Ovary (tissue), 10 donors: ENCODE measurements at regions of chr5 and their contacts with region 1.

Region 1: DNA sequence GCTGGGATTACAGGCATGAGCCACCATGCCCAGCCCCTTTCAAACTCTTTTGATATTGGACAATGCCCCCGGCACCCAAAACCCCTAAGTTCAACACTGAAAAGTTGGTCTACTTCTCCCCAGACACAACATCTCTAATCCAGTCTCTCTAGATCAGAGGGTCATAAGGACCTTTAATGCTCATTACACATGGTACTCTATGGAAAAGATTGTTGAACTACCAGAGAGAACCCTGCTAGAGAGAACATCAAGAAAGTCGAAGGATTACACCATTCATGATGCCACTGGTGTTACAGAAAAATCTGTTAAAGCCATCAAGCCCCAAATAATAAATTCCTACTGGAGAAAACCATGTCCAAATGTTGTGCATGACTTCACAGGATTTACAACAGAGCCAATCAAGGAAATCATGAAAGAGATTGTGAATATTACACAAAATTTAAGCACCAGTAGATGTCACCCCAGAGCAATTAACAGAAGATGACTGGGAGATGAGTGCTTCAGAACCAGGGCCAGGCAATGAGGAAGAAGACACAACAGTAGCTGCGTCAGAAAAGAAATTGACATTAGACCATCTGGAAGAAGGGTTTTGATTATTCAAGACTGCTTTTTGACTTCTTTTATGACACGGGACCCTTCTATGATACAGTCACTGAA is 28.3 kb upstream of the NIPAL4 start:
- DNase-seq: no peak
- H3K4me3 ChIP-seq: no peak overlapping the region
- H3K27ac ChIP-seq: no peak overlapping the region
- H3K4me1 ChIP-seq: no peaks in the 10 kb centered on the region
- H3K27me3 ChIP-seq: no peaks in the 10 kb centered on the region
- CTCF ChIP-seq: peak in 1 of 3 donors; percentile 48
- EP300 ChIP-seq: no peak
- POLR2A ChIP-seq: no peak

Region 2: GRCh38 chr5:157718519-157718918 is 286.8 kb after region 1 on chr5:
- intact Hi-C with region 1: loop called (anchors 2 to 10 kb)
- DNase-seq: peak in 1 of 5 donors; percentile 26
- H3K4me3 ChIP-seq: no peak overlapping the region
- H3K27ac ChIP-seq: no peak overlapping the region
- H3K4me1 ChIP-seq: peaks cover 3% of the 10 kb centered on the region
- H3K27me3 ChIP-seq: no peaks in the 10 kb centered on the region
- CTCF ChIP-seq: peak in 2 of 3 donors; percentile 63 to 67
- EP300 ChIP-seq: no peak
- POLR2A ChIP-seq: no peak